ENCODE measurements at regions of chr3 and their contacts with region 1.

Region 1: DNA sequence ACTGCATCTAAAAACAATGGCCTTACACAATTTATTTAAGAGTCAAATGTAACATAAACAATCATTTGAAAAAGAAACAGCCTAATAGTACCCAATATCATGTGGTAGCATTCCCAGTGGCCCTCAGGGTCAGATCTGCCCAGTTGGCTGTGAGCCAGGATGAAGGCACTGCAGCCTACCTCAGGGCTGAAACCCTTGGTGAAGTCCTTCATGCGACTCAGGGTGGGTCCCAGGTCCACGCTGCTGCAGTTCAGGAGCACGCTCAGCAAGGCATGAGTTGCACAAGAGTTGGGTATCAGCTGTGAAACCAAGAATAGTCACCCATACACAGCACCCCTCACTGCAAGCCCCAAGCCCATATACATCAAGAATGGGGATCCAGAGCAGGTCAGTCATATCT is 37.1 kb downstream of the SEMA3G start:
- DNase-seq: no peak
- H3K4me3 Mint-ChIP-seq: peak overlapping the region; percentile 95
- H3K27ac Mint-ChIP-seq: no peak overlapping the region
- H3K4me1 Mint-ChIP-seq: peaks cover 34% of the 10 kb centered on the region
- H3K27me3 Mint-ChIP-seq: peaks cover 4% of the 10 kb centered on the region

Region 2: DNA sequence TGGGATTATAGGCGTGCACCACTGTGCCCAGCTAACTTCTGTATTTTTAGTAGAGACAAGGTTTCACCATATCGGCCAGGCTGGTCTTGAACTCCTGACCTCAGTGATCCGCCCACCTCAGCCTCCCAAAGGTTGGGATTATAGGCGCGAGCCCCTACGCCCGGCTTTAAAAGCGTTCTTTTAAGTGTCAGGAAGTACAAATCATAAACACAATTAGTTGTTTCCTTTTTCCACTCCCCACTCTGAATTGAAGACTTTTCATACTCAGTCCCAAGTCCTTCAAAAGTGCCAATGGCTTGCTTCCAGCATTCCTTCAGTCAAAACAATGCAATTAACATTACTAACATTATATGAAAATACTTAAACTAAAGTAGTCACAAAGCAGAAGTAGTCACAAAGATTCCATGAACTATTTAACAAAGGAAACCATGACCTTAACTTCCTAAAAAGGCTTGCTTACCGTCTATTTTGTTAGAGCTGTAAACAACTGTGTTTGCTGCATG is 137.5 kb before region 1 on chr3:
- CTCF ChIA-PET with region 1: no interaction called
- DNase-seq: no peak
- H3K4me3 Mint-ChIP-seq: peak overlapping the region; percentile 70
- H3K27ac Mint-ChIP-seq: peak overlapping the region; percentile 98
- H3K4me1 Mint-ChIP-seq: peaks cover 92% of the 10 kb centered on the region
- H3K27me3 Mint-ChIP-seq: no peaks in the 10 kb centered on the region

Region 3: GRCh38 chr3:52423173-52423572 is 15.4 kb after region 1 on chr3:
- CTCF ChIA-PET with region 1: interaction called, 13 read pairs
- DNase-seq: no peak
- H3K4me3 Mint-ChIP-seq: no peak overlapping the region
- H3K27ac Mint-ChIP-seq: no peak overlapping the region
- H3K4me1 Mint-ChIP-seq: no peaks in the 10 kb centered on the region
- H3K27me3 Mint-ChIP-seq: peaks cover 10% of the 10 kb centered on the region

Region 4: DNA sequence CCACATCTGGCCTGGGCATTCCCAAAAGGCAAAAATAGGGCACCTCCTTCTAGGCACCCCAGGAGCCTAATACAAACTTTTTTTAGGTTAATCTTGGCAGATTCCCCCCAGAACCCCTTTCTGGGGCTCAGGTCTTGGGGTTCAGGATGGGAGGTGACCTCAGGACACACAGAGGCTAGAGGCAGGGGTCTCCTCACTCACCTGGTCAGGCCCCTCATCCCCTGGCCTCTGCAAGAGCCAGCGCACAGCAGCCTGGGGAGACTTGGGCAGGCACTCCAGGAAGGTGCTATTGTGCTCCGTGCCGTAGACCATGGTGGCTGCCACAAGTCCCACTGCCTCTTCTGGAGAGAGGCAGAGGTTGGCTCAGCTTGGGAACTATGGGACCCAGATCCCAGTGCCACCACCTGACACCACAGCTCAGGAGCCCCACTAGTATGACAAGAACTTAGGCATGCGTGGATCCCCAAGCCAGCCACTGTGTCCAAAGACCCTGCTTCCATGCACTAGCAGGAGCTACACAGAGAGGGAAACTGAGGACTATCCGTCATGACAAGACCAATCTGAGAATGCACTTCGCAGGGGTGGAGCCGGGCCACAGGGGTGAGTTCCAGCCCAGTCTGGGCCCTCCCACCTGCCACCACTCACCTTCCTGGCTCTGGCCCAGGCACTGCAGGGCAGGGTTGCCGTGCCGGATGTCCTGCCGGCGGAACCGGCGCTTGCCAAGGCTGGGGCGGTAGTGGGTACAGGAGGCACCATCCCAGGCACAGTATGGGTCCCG is 29.7 kb after region 1 on chr3:
- CTCF ChIA-PET with region 1: interaction called, 11 read pairs
- DNase-seq: no peak
- H3K4me3 Mint-ChIP-seq: no peak overlapping the region
- H3K27ac Mint-ChIP-seq: no peak overlapping the region
- H3K4me1 Mint-ChIP-seq: no peaks in the 10 kb centered on the region
- H3K27me3 Mint-ChIP-seq: peaks cover 27% of the 10 kb centered on the region

Region 5: GRCh38 chr3:52444860-52445793 is 37.3 kb after region 1 on chr3 and contains the start of gene SEMA3G:
- CTCF ChIA-PET with region 1: interaction called, 37 read pairs
- DNase-seq: peak; percentile 89
- H3K4me3 Mint-ChIP-seq: no peak within 1 kb of the TSS
- H3K27ac Mint-ChIP-seq: no peak within 1 kb of the TSS
- H3K4me1 Mint-ChIP-seq: peaks cover 13% of the 10 kb centered on the region
- H3K27me3 Mint-ChIP-seq: peaks cover 8% of the 10 kb centered on the region